Activated B cell treated with CpG ODN at 0.5 μM for 24 hours (primary cell): ENCODE measurements at regions of chr11 and their contacts with region 1.

Region 1: GRCh38 chr11:122853971-122854446 is 15.7 kb downstream of the CRTAM start:
- DNase-seq: no peak
- ATAC-seq: no peak
- H3K4me3 Mint-ChIP-seq: no peak overlapping the region
- H3K27ac Mint-ChIP-seq: no peak overlapping the region
- H3K4me1 Mint-ChIP-seq: peaks cover 35% of the 10 kb centered on the region
- H3K27me3 Mint-ChIP-seq: no peaks in the 10 kb centered on the region
- CTCF ChIP-seq: peak; percentile 51

Region 2: DNA sequence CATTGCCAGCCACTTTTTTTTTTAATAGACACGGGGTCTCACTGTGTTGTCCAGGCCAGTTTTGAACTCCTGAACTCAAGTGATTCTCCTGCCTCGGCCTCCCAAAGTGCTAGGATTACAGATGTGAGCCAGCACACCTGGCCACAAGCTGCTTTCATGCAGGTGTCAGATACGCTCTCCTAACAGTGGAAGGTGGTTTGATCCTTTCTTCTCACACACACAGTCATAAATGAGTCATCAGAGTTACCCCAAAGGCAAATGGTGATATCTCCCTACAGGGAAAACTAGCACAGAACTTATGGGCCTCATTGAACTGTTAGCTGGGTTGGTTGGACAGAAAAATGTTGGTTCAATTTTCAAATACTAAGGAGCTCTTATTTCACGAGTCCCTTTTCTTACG is 236.7 kb before region 1 on chr11:
- CTCF ChIA-PET with region 1: no interaction called
- POLR2A ChIA-PET with region 1: no interaction called
- intact Hi-C with region 1: no loop called
- DNase-seq: no peak
- ATAC-seq: no peak
- H3K4me3 Mint-ChIP-seq: no peak overlapping the region
- H3K27ac Mint-ChIP-seq: no peak overlapping the region
- H3K4me1 Mint-ChIP-seq: no peaks in the 10 kb centered on the region
- H3K27me3 Mint-ChIP-seq: peaks cover 2% of the 10 kb centered on the region
- CTCF ChIP-seq: no peak

Region 3: GRCh38 chr11:122628810-122629555 is 225.0 kb before region 1 on chr11:
- CTCF ChIA-PET with region 1: interaction called, 28 read pairs
- POLR2A ChIA-PET with region 1: no interaction called
- intact Hi-C with region 1: loop called (anchors 1 kb)
- DNase-seq: peak; percentile 47
- ATAC-seq: peak; percentile 88
- H3K4me3 Mint-ChIP-seq: no peak overlapping the region
- H3K27ac Mint-ChIP-seq: no peak overlapping the region
- H3K4me1 Mint-ChIP-seq: peaks cover 2% of the 10 kb centered on the region
- H3K27me3 Mint-ChIP-seq: peaks cover 15% of the 10 kb centered on the region
- CTCF ChIP-seq: no peak

Region 4: GRCh38 chr11:122646549-122647340 is 207.3 kb before region 1 on chr11:
- CTCF ChIA-PET with region 1: no interaction called
- POLR2A ChIA-PET with region 1: no interaction called
- intact Hi-C with region 1: no loop called
- DNase-seq: no peak
- ATAC-seq: no peak
- H3K4me3 Mint-ChIP-seq: no peak overlapping the region
- H3K27ac Mint-ChIP-seq: no peak overlapping the region
- H3K4me1 Mint-ChIP-seq: no peaks in the 10 kb centered on the region
- H3K27me3 Mint-ChIP-seq: peaks cover 12% of the 10 kb centered on the region
- CTCF ChIP-seq: no peak

Region 5: DNA sequence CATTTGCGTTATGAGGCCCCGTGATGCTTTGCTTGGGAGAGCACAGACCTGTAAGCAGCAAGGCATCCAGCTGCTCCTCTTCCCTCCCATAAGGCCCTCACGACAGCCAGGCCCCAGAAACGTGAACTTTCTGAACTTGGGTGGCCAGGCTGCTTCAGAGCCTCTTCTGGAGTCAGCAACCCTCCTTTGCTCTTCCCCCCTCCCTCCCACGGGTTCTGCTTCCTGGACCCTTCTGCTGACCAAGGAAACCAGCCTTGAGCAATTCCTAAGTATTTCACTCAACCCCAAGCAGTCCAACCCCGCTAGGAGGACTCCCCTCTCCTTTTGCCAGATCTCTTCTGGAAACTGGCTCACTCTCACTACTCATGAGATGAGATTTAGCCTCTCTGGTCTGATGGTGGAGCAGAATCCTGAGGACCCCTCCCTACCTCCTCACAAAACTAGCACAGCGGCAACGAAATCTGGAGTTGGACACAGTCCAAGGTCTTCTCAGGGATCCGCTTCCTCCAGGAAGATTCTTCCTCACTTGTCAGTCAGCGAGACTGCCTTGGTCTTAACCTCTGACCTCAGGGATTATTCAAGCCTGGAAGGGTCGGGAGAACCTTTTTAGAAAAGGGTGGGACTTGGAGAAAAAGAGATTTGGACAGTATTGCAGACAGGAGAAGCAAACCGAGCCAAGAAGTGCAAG is 112.3 kb before region 1 on chr11:
- CTCF ChIA-PET with region 1: no interaction called
- POLR2A ChIA-PET with region 1: no interaction called
- intact Hi-C with region 1: no loop called
- DNase-seq: no peak
- ATAC-seq: no peak
- H3K4me3 Mint-ChIP-seq: no peak overlapping the region
- H3K27ac Mint-ChIP-seq: no peak overlapping the region
- H3K4me1 Mint-ChIP-seq: peaks cover 3% of the 10 kb centered on the region
- H3K27me3 Mint-ChIP-seq: no peaks in the 10 kb centered on the region
- CTCF ChIP-seq: no peak

Region 6: GRCh38 chr11:122763108-122763507 is 90.9 kb before region 1 on chr11:
- CTCF ChIA-PET with region 1: no interaction called
- POLR2A ChIA-PET with region 1: no interaction called
- intact Hi-C with region 1: no loop called
- DNase-seq: no peak
- ATAC-seq: no peak
- H3K4me3 Mint-ChIP-seq: no peak overlapping the region
- H3K27ac Mint-ChIP-seq: no peak overlapping the region
- H3K4me1 Mint-ChIP-seq: no peaks in the 10 kb centered on the region
- H3K27me3 Mint-ChIP-seq: no peaks in the 10 kb centered on the region
- CTCF ChIP-seq: no peak

Region 7: DNA sequence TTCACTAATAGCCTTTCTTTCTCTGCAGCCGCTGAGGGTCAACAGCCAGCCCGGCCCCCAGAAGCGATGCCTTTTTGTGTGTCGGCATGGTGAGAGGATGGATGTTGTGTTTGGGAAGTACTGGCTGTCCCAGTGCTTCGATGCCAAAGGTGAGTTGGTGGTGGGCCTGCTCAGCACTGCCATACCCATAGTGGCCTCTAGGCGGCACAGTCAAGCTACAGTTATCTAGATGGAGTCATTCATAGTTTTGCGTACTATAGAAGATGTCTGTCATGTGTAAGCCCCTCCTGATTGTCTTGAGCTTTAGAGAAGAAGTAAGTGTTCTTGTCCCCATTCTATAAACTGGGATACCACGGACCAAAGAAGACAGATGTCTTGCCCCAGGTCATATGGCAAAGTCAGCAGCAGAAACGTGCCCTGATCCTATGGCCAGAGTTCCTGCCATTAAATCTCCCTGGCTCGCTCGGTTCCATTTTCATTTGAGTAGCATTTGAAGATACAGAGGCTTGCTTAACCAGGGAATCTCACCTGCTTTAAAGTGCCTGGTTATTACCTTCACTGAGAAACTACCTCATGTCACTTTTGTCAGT is 57.8 kb before region 1 on chr11:
- CTCF ChIA-PET with region 1: interaction called, 197 read pairs
- POLR2A ChIA-PET with region 1: interaction called, 6 read pairs
- intact Hi-C with region 1: loop called (anchors 1 kb)
- DNase-seq: peak; percentile 52
- ATAC-seq: peak; percentile 97
- H3K4me3 Mint-ChIP-seq: no peak overlapping the region
- H3K27ac Mint-ChIP-seq: no peak overlapping the region
- H3K4me1 Mint-ChIP-seq: peaks cover 4% of the 10 kb centered on the region
- H3K27me3 Mint-ChIP-seq: no peaks in the 10 kb centered on the region
- CTCF ChIP-seq: peak; percentile 39

Region 8: DNA sequence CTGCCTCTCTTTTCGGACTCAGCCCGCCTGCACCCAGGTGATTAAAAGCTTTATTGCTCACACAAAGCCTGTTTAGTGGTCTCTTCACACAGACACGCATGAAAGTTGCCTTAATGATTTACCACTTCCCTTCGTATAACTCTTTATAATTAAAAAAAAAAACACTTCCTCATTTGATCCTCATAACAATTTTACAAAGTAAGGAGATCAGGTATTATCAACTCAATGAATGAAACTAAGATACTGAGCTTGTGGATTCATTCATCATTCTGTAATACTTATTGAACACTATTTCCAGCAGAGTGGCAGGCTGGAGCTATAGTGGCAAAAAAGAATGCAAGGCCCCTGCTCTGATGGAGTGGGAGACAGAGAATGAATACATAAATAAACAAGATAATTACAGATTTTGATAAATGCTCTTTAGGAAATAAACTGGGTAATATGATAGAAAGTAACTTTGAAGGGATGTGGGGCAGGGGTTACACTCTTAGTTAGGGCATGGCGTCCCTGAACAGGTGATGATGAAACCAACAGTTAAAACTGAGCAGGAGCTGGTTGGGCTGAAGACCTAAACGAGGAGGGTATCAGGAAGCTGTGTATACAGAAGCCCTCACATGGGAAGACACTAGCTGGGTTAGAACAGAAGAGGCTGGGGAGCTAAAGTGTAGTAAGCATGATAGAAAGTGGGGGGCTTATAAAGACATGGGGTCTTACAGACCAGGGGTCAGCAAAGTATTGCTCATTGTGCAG is 21.1 kb before region 1 on chr11:
- CTCF ChIA-PET with region 1: interaction called, 4 read pairs
- POLR2A ChIA-PET with region 1: no interaction called
- intact Hi-C with region 1: loop called (anchors 1 kb)
- DNase-seq: no peak
- ATAC-seq: peak; percentile 56
- H3K4me3 Mint-ChIP-seq: peak overlapping the region; percentile 9
- H3K27ac Mint-ChIP-seq: no peak overlapping the region
- H3K4me1 Mint-ChIP-seq: peaks cover 22% of the 10 kb centered on the region
- H3K27me3 Mint-ChIP-seq: peaks cover 8% of the 10 kb centered on the region
- CTCF ChIP-seq: no peak